Heart right ventricle (tissue), 16 donors: ENCODE measurements at regions of chr17 and their contacts with region 1.

Region 1: DNA sequence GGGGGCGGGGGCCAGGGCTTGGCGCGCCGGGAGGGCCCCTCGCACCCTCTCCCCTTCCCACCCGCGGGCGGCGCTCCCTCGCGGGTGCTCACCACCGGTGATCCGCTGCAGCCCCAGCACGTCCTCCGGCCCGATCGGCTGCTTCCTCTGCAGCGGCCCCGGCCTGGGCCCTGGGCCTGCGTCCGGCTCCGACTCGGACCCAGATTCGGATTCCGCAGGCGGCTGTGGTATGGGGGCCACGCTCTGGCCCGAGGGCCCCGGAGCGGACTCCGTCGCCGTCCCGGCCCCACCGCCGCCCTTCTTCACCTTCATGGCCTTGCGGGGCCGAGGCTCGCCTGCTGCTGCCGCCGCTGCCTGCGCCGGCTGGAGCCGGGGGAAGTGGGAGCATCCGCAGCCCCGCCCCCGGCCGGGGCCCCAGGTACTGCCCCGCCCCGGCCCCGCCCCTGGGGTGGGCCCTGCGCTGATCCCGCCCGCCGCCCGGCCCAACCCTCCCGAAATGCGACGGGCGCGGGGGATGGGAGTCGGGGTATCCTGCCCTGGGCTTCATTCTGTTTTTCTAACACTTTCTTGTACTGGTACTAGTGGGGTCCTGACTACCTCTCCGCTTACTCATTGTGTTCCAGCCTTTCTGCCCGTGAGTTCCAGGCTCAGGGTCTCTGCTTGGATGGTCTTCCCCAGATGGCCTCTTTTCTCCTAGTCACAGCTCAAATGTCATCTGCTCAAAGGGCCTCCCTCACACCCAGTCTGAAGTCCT is at the start of gene UNC119:
- DNase-seq: peak; percentile 67 to 81
- ATAC-seq: peak; percentile 94 to 98 (median 95)
- H3K4me3 ChIP-seq: peak within 1 kb of the TSS; percentile 64 to 99 (median 97)
- H3K27ac ChIP-seq: peak within 1 kb of the TSS in 9 of 10 donors; percentile 60 to 90 (median 78)
- H3K4me1 ChIP-seq: peaks cover 0 to 43% (median 21%) of the 10 kb centered on the region in 9 donors
- H3K27me3 ChIP-seq: no peaks in the 10 kb centered on the region
- CTCF ChIP-seq: no peak
- total RNA-seq, gene UNC119: 10.6 to 23.4 (median 21.0) TPM

Region 2: GRCh38 chr17:28571255-28572122 is 19.1 kb after region 1 on chr17 and contains the start of gene PIGS:
- intact Hi-C with region 1: loop called in 1 of 10 experiments (anchors 2 kb)
- DNase-seq: peak; percentile 95 to 96
- ATAC-seq: peak; percentile 87 to 97 (median 95)
- H3K4me3 ChIP-seq: peak within 1 kb of the TSS; percentile 78 to 99 (median 97)
- H3K27ac ChIP-seq: peak within 1 kb of the TSS; percentile 26 to 92 (median 86)
- H3K4me1 ChIP-seq: peaks cover 5 to 59% (median 43%) of the 10 kb centered on the region in 9 donors
- H3K27me3 ChIP-seq: no peaks in the 10 kb centered on the region
- CTCF ChIP-seq: peak in 1 of 9 donors; percentile 11
- total RNA-seq, gene PIGS: 44.6 to 69.3 (median 49.6) TPM

Region 3: DNA sequence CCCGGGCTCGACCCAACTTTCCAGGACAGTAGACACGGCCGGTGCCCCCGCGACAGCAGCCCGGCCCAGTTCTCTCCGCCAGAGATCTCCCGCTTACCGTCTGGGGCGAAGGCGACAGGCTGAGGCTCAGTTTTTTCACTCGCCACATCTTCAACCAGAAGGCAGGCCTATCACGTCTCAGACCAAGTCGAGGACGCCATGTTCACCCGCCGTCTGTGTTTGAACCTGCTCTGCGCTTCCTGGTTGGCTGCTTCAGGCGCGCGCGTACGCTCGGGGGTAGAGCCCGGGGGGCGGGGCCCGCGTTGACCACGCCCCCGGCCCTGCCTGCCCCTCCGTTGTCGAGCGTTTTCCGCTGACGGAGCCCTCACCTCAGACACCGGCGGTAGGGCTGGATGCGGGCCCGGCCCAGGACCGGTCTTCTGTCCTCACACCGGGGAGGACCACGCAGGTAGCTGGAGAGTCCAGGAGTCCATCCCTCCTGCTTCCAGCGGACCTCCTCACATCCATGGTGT is 46.4 kb after region 1 on chr17 and contains the start of gene SPAG5:
- intact Hi-C with region 1: loop called in 1 of 10 experiments (anchors 5 kb)
- DNase-seq: peak; percentile 91 to 92
- ATAC-seq: peak; percentile 98 to 100 (median 99)
- H3K4me3 ChIP-seq: peak within 1 kb of the TSS; percentile 26 to 80 (median 67)
- H3K27ac ChIP-seq: peak within 1 kb of the TSS; percentile 21 to 97 (median 87)
- H3K4me1 ChIP-seq: peaks cover 0 to 22% (median 13%) of the 10 kb centered on the region in 9 donors
- H3K27me3 ChIP-seq: no peaks in the 10 kb centered on the region
- CTCF ChIP-seq: no peak
- total RNA-seq, gene SPAG5: 0.55 to 6.5 (median 1.2) TPM

Region 4: GRCh38 chr17:28612936-28613872 is 60.8 kb after region 1 on chr17:
- intact Hi-C with region 1: loop called in 6 of 10 experiments (anchors 5 to 10 kb)
- DNase-seq: peak in 1 of 2 donors; percentile 37
- ATAC-seq: peak in 6 of 8 donors; percentile 25 to 62 (median 44)
- H3K4me3 ChIP-seq: no peak overlapping the region
- H3K27ac ChIP-seq: no peak overlapping the region
- H3K4me1 ChIP-seq: no peaks in the 10 kb centered on the region
- H3K27me3 ChIP-seq: no peaks in the 10 kb centered on the region
- CTCF ChIP-seq: peak; percentile 43 to 77 (median 71)